Gastrocnemius medialis (tissue), 4 donors: ENCODE measurements at regions of chr2 and their contacts with region 1.

Region 1: DNA sequence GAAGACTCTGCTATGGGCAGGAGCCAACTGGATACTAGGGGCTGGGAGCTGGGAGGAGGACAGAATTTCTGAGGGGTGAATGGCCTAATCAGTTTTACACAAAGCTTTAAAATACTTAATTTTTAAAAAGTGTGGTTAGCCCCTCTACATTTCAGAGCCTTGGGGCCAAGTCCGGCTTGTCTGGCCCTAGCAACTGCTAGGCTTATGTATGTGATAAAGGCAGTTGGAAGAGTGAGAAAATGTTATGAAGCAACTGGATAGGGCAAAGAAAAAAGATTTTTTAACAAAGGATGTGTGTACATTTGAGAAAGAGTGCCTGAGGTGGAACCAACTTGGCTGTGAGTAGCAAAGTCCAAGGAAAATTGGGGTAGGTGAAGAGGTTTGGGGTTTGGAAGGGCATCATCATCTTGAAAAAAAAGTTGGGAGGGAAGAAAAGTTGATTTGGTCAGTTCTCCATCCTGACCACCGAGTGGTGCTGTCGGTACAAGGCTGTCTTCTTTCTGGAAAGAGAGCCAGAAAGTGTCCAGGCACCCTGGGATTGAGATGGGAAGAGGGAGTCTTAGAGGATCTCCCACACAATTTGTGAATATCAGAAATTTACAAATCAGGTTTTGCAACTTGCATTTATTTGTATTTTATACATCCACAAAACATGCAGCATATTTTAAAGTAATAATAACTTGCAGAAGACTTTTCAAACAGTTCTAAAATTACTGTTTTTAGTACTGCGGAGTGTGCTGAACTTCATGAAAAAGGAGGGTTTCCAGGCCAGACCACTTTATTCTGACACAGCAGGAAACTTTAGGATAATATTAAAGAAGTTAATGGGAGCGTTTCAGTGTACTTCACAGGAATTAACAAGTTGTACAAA is 10.5 kb upstream of the CDK15 start:
- DNase-seq: no peak
- ATAC-seq: peak; percentile 66 to 72
- H3K4me3 ChIP-seq: no peak overlapping the region
- H3K27ac ChIP-seq: no peak overlapping the region
- H3K4me1 ChIP-seq: no peaks in the 10 kb centered on the region
- H3K27me3 ChIP-seq: no peaks in the 10 kb centered on the region
- CTCF ChIP-seq: peak; percentile 40 to 70 (median 52)
- POLR2A ChIP-seq: no peak

Region 2: GRCh38 chr2:202178342-202178958 is 382.6 kb after region 1 on chr2:
- in situ Hi-C with region 1: loop called in 1 of 4 experiments (anchors 5 kb)
- intact Hi-C with region 1: loop called (anchors 5 kb)
- DNase-seq: peak; percentile 22 to 38
- ATAC-seq: peak; percentile 90 to 96
- H3K4me3 ChIP-seq: no peak overlapping the region
- H3K27ac ChIP-seq: no peak overlapping the region
- H3K4me1 ChIP-seq: no peaks in the 10 kb centered on the region
- H3K27me3 ChIP-seq: no peaks in the 10 kb centered on the region
- CTCF ChIP-seq: peak; percentile 75 to 88 (median 79)
- POLR2A ChIP-seq: no peak

Region 3: GRCh38 chr2:202249521-202249850 is 453.6 kb after region 1 on chr2:
- in situ Hi-C with region 1: no loop called
- intact Hi-C with region 1: no loop called
- DNase-seq: peak; percentile 38 to 84
- ATAC-seq: peak; percentile 96 to 98
- H3K4me3 ChIP-seq: no peak overlapping the region
- H3K27ac ChIP-seq: peak overlapping the region; percentile 81 to 92 (median 86)
- H3K4me1 ChIP-seq: peaks cover 7 to 8% of the 10 kb centered on the region in 2 donors
- H3K27me3 ChIP-seq: no peaks in the 10 kb centered on the region
- CTCF ChIP-seq: no peak
- POLR2A ChIP-seq: no peak